OCI-LY7 (cell line): ENCODE measurements at regions of chr3 and their contacts with region 1.

Region 1: GRCh38 chr3:34200576-34200975 is 402.1 kb downstream of the PDCD6IP start:
- DNase-seq: peak; percentile 63
- H3K4me3 ChIP-seq: peak overlapping the region; percentile 9
- H3K27ac ChIP-seq: peak overlapping the region; percentile 45
- H3K4me1 ChIP-seq: peaks cover 35% of the 10 kb centered on the region
- CTCF ChIP-seq: no peak

Region 2: GRCh38 chr3:34212656-34213055 is 12.1 kb after region 1 on chr3:
- CTCF ChIA-PET with region 1: no interaction called
- POLR2A ChIA-PET with region 1: interaction called, 12 read pairs
- intact Hi-C with region 1: no loop called
- DNase-seq: no peak
- H3K4me3 ChIP-seq: no peak overlapping the region
- H3K27ac ChIP-seq: no peak overlapping the region
- H3K4me1 ChIP-seq: peaks cover 4% of the 10 kb centered on the region
- CTCF ChIP-seq: no peak